Ascending aorta (tissue), 2 donors: ENCODE measurements at regions of chr22 and their contacts with region 1.

Region 1: DNA sequence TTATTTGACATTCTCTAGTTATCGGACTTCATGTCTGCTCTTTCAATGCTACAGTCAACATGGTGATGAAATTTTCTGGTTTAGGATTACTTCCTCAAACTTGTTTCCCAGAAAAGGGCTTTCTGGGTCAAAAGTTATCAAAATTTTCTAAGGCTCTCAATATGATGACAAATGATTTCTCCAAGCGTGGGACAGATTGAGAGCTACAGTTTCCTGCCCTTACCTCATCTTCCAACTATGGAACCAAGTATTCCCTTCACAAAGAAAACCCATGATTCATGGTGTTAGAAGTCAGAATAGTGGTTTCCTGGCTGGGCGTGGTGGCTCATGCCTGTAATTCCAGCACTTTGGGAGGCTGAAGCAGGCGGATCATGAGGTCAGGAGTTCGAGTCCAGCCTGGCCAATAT is 17.8 kb downstream of the MYO18B start:
- DNase-seq: peak in 1 of 2 donors; percentile 89
- H3K4me3 ChIP-seq: no peak overlapping the region
- H3K27ac ChIP-seq: peak overlapping the region; percentile 70 to 87
- H3K4me1 ChIP-seq: peaks cover 3 to 16% of the 10 kb centered on the region in 2 donors
- H3K27me3 ChIP-seq: no peaks in the 10 kb centered on the region
- CTCF ChIP-seq: no peak

Region 2: GRCh38 chr22:25069758-25070481 is 689.9 kb before region 1 on chr22:
- intact Hi-C with region 1: loop called (anchors 10 kb)
- DNase-seq: peak in 1 of 2 donors; percentile 81
- H3K4me3 ChIP-seq: peak overlapping the region; percentile 51 to 72
- H3K27ac ChIP-seq: peak overlapping the region; percentile 94 to 96
- H3K4me1 ChIP-seq: peaks cover 23 to 40% of the 10 kb centered on the region in 2 donors
- H3K27me3 ChIP-seq: no peaks in the 10 kb centered on the region
- CTCF ChIP-seq: no peak

Region 3: DNA sequence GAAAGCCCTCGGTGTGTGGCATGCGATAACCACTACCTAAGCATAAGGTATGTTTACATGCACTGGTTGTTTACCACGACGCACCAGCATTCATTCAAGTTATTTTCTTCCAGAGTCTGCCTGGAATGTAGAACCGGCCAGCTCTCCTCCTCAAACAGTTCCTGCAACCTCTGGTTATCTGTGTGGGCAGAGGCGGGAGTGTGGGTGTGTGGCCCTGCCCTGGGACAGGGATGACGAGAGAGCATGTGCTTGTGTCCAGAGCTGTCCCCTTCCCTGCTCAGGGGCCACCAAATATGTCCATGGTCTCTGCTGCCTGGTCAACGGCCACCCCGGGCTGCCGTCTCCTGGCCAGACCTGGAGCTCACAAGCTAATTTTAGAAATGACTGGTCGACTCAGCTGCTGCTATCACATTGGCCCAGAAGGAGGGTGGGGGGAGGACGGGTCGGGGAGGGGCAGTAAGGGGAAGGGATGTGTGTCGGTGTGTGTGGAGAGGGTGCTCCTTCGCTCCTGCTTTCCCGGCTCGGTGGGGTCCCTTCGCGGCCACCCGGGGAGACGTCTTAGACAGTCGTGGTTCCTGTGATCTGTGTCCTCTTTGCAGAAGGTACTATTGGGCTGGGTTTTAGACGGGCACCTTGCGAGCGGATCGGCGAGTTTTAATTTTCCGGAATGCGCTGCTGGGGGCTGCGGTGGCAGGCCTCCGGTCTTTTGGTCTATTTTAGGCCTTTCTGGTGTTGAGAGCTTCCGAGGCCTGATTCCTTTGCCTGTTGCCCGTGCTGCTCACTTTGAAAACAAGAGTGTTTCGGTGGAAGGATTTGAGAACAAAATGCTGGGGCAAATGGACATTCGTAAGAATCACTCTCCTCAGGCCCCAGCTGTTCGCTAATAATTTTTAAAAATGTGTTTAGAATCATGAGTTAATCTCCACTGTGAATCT is 17.9 kb before region 1 on chr22 and contains the start of gene MYO18B:
- intact Hi-C with region 1: loop called (anchors 1 kb)
- DNase-seq: peak; percentile 63 to 90
- H3K4me3 ChIP-seq: peak within 1 kb of the TSS; percentile 49 to 65
- H3K27ac ChIP-seq: peak within 1 kb of the TSS; percentile 70 to 88
- H3K4me1 ChIP-seq: peaks cover 0 to 12% of the 10 kb centered on the region in 2 donors
- H3K27me3 ChIP-seq: no peaks in the 10 kb centered on the region
- CTCF ChIP-seq: no peak
- total RNA-seq, gene MYO18B: 12.0 TPM

Region 4: GRCh38 chr22:25959818-25960774 is 200.3 kb after region 1 on chr22:
- intact Hi-C with region 1: no loop called
- DNase-seq: no peak
- H3K4me3 ChIP-seq: no peak overlapping the region
- H3K27ac ChIP-seq: no peak overlapping the region
- H3K4me1 ChIP-seq: no peaks in the 10 kb centered on the region
- H3K27me3 ChIP-seq: no peaks in the 10 kb centered on the region
- CTCF ChIP-seq: no peak